Activated naive CD4-positive, alpha-beta T cell treated with anti-CD3 and anti-CD28 coated beads for 36 hours (primary cell): ENCODE measurements at regions of chrX and their contacts with region 1.

Region 1: GRCh38 chrX:30735839-30736238 is 82.6 kb downstream of the GK start:
- DNase-seq: peak; percentile 90
- H3K4me3 Mint-ChIP-seq: no peak overlapping the region
- H3K27ac Mint-ChIP-seq: no peak overlapping the region
- H3K4me1 Mint-ChIP-seq: peaks cover 11% of the 10 kb centered on the region
- H3K27me3 Mint-ChIP-seq: no peaks in the 10 kb centered on the region

Region 2: GRCh38 chrX:30577362-30577991 is 158.4 kb before region 1 on chrX and contains the start of gene TASL:
- CTCF ChIA-PET with region 1: interaction called, 3 read pairs
- intact Hi-C with region 1: loop called (anchors 5 kb)
- DNase-seq: peak; percentile 48
- H3K4me3 Mint-ChIP-seq: peak within 1 kb of the TSS; percentile 82
- H3K27ac Mint-ChIP-seq: peak within 1 kb of the TSS; percentile 86
- H3K4me1 Mint-ChIP-seq: peaks cover 17% of the 10 kb centered on the region
- H3K27me3 Mint-ChIP-seq: no peaks in the 10 kb centered on the region
- total RNA-seq, gene TASL: 0.79 to 1.1 TPM

Region 3: GRCh38 chrX:30713061-30713525 is 22.7 kb before region 1 on chrX:
- CTCF ChIA-PET with region 1: interaction called, 8 read pairs
- intact Hi-C with region 1: loop called (anchors 2 kb)
- DNase-seq: peak; percentile 65
- H3K4me3 Mint-ChIP-seq: no peak overlapping the region
- H3K27ac Mint-ChIP-seq: peak overlapping the region; percentile 82
- H3K4me1 Mint-ChIP-seq: peaks cover 22% of the 10 kb centered on the region
- H3K27me3 Mint-ChIP-seq: no peaks in the 10 kb centered on the region

Region 4: GRCh38 chrX:30831082-30831481 is 95.2 kb after region 1 on chrX:
- CTCF ChIA-PET with region 1: interaction called, 10 read pairs
- intact Hi-C with region 1: no loop called
- DNase-seq: peak; percentile 48
- H3K4me3 Mint-ChIP-seq: no peak overlapping the region
- H3K27ac Mint-ChIP-seq: peak overlapping the region; percentile 12
- H3K4me1 Mint-ChIP-seq: peaks cover 34% of the 10 kb centered on the region
- H3K27me3 Mint-ChIP-seq: no peaks in the 10 kb centered on the region

Region 5: GRCh38 chrX:30889147-30890140 is 153.6 kb after region 1 on chrX and contains the start of gene TAB3:
- CTCF ChIA-PET with region 1: interaction called, 13 read pairs
- intact Hi-C with region 1: loop called (anchors 1 kb)
- DNase-seq: peak; percentile 95
- H3K4me3 Mint-ChIP-seq: peak within 1 kb of the TSS; percentile 85
- H3K27ac Mint-ChIP-seq: peak within 1 kb of the TSS; percentile 93
- H3K4me1 Mint-ChIP-seq: peaks cover 30% of the 10 kb centered on the region
- H3K27me3 Mint-ChIP-seq: no peaks in the 10 kb centered on the region
- total RNA-seq, gene TAB3: 13.6 to 15.7 TPM

Region 6: DNA sequence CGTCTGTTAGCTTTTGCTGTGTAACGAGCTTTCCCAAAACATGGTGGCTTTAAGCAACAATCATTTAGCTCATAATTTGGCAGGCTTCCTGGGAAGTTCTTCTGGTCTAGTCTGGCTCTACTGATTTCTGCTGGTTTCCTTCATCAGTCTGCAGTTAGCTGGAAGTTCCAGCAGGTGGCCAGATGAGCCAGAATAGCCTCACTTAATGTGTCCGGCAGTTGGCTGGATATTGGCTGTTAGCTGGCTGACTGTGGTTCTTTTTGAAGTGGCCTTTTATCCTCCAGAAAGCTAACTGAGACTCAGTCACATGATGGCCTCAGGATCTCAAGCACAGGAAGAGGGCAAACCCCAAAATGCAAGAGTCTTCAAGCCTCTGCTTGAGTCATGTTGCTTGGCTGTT is 301.1 kb after region 1 on chrX:
- CTCF ChIA-PET with region 1: interaction called, 3 read pairs
- intact Hi-C with region 1: loop called (anchors 2 kb)
- DNase-seq: peak; percentile 8
- H3K4me3 Mint-ChIP-seq: no peak overlapping the region
- H3K27ac Mint-ChIP-seq: no peak overlapping the region
- H3K4me1 Mint-ChIP-seq: peaks cover 2% of the 10 kb centered on the region
- H3K27me3 Mint-ChIP-seq: no peaks in the 10 kb centered on the region

Region 7: GRCh38 chrX:31658360-31658759 is 922.5 kb after region 1 on chrX:
- CTCF ChIA-PET with region 1: interaction called, 8 read pairs
- intact Hi-C with region 1: loop called (anchors 2 kb)
- DNase-seq: no peak
- H3K4me3 Mint-ChIP-seq: no peak overlapping the region
- H3K27ac Mint-ChIP-seq: no peak overlapping the region
- H3K4me1 Mint-ChIP-seq: no peaks in the 10 kb centered on the region
- H3K27me3 Mint-ChIP-seq: no peaks in the 10 kb centered on the region